ENCODE measurements at regions of chr20 and their contacts with region 1.

Region 1: GRCh38 chr20:55522296-55522815 is 483.0 kb downstream of the CBLN4 start:
- DNase-seq: no peak
- H3K4me3 Mint-ChIP-seq: no peak overlapping the region
- H3K27ac Mint-ChIP-seq: no peak overlapping the region
- H3K4me1 Mint-ChIP-seq: no peaks in the 10 kb centered on the region
- H3K27me3 Mint-ChIP-seq: no peaks in the 10 kb centered on the region

Region 2: DNA sequence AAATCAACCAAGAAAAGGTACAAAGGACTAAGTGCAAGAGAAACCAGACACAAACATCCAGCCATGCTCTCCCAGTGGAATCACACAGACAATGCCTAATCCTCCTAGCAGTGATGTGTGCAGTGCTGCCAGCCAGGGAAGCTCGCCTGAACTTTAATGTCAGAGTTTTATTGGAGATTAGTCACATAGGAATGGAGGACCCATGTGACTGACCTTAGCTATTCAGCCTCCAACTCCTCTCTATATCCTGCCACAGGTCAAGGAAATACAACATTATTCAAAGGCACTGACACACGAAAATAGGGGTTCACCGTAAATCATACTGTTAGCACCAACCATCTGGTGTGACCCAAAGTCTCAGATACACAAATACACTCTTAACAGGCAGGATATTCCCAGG is 362.3 kb before region 1 on chr20:
- CTCF ChIA-PET with region 1: no interaction called
- POLR2A ChIA-PET with region 1: no interaction called
- intact Hi-C with region 1: loop called (anchors 10 kb)
- DNase-seq: no peak
- H3K4me3 Mint-ChIP-seq: no peak overlapping the region
- H3K27ac Mint-ChIP-seq: no peak overlapping the region
- H3K4me1 Mint-ChIP-seq: no peaks in the 10 kb centered on the region
- H3K27me3 Mint-ChIP-seq: no peaks in the 10 kb centered on the region

Region 3: DNA sequence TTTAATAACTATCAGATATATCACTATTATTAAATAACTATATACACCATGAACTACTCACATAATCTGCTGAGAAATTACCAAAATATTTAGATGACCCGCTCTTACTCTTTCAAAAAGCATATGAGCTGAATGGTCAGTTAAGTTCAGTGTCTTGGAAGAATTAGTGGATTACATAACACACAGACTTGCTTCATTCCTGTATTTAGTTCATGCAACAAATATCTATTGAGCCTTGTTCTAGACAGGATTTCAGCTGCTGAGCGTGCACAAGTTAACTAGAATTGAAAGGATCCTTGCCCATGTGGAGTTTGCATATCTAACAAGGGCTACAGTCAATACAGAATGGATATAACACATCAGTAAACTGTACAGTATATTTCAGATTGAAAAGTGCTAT is 83.3 kb before region 1 on chr20:
- CTCF ChIA-PET with region 1: no interaction called
- POLR2A ChIA-PET with region 1: no interaction called
- intact Hi-C with region 1: no loop called
- DNase-seq: no peak
- H3K4me3 Mint-ChIP-seq: no peak overlapping the region
- H3K27ac Mint-ChIP-seq: no peak overlapping the region
- H3K4me1 Mint-ChIP-seq: no peaks in the 10 kb centered on the region
- H3K27me3 Mint-ChIP-seq: no peaks in the 10 kb centered on the region

Region 4: GRCh38 chr20:55500130-55500529 is 22.2 kb before region 1 on chr20:
- CTCF ChIA-PET with region 1: no interaction called
- POLR2A ChIA-PET with region 1: no interaction called
- intact Hi-C with region 1: no loop called
- DNase-seq: no peak
- H3K4me3 Mint-ChIP-seq: no peak overlapping the region
- H3K27ac Mint-ChIP-seq: no peak overlapping the region
- H3K4me1 Mint-ChIP-seq: no peaks in the 10 kb centered on the region
- H3K27me3 Mint-ChIP-seq: no peaks in the 10 kb centered on the region

Measured in activated CD4-positive, alpha-beta memory T cell treated with anti-CD3 and anti-CD28 coated beads for 36 hours (primary cell).